ENCODE measurements at regions of chr11 and their contacts with region 1.

Region 1: DNA sequence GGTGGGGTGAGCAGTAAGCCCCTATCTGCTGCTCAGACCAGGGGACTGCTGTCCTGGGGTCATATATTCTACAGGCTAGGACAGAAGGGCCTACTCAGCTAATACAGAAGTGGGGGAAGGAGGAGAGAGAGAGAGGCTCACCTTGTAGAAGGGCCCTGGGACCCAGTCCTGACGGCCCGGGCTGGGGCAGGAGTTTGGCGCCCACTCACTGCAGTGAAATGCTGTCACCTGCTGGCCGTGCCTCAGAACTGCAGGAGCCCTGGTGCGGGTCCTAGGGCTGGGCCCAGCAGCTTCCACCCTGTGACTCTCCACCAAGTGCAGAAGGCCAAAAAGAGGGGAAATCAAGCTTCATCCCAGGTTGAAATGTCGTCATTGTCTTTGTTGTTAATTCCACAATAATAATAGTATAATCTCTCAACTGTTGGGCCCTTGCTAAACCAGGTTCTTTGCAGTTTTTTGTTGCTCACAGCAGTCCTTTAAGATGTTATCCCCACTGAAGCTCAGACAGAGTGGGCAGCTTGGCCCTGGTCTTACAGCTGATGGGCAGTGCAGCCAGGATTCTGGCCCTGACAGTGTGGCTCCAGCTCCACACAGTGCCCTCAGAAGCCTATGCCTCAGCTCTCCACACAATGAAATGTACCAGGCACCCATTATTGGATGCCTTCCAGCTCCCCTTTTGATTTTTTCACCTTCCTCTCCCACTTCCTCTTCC is 29.6 kb downstream of the TRIM29 start:
- DNase-seq: peak; percentile 62
- H3K4me3 ChIP-seq: no peak overlapping the region
- H3K27ac ChIP-seq: no peak overlapping the region
- H3K4me1 ChIP-seq: no peaks in the 10 kb centered on the region
- H3K27me3 ChIP-seq: peaks cover 67% of the 10 kb centered on the region
- CTCF ChIP-seq: peak; percentile 100

Region 2: DNA sequence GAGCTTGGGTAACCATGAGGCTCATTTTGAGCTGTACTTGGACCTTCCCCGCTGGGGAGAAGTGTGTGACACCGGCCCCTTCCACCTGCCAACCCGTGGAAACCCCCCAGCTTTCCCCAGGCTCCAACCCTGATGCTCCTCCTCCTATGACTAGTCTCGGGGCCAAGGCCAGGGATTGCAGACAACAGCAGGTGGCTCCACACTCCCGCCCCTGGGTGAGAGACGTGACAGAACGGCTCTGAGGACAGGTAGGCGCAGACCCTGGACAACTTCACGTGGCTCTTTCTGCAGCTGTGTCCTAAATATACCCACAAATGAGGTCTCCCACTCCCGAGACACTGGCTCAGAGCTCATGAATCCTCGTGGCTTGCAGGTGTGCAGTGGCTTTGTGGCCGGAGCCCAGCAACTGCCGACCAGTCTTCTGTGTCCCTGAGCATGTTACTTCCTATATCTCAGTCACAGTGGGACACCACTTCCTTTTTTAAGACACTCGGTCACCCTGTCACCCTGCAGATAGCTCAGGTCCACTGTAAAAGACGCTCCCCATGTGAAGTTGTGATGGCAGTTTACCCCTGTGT is 434.5 kb before region 1 on chr11:
- intact Hi-C with region 1: loop called (anchors 5 kb)
- DNase-seq: no peak
- H3K4me3 ChIP-seq: no peak overlapping the region
- H3K27ac ChIP-seq: peak overlapping the region; percentile 8
- H3K4me1 ChIP-seq: peaks cover 37% of the 10 kb centered on the region
- H3K27me3 ChIP-seq: no peaks in the 10 kb centered on the region
- CTCF ChIP-seq: no peak

Measured in left ventricle myocardium inferior (tissue), 1 donor.